ENCODE measurements at regions of chr16 and their contacts with region 1.

Region 1: GRCh38 chr16:80526425-80527061 is 14.2 kb upstream of the DYNLRB2 start:
- DNase-seq: peak; percentile 31 to 65 (median 58)
- H3K4me3 ChIP-seq: no peak overlapping the region
- H3K4me3 Mint-ChIP-seq: peak overlapping the region in 1 of 2 donors; percentile 6
- H3K27ac ChIP-seq: no peak overlapping the region
- H3K27ac Mint-ChIP-seq: no peak overlapping the region
- H3K4me1 ChIP-seq: no peaks in the 10 kb centered on the region
- H3K4me1 Mint-ChIP-seq: no peaks in the 10 kb centered on the region
- H3K27me3 ChIP-seq: no peaks in the 10 kb centered on the region
- H3K27me3 Mint-ChIP-seq: peaks cover 2 to 4% (median 2%) of the 10 kb centered on the region in 3 donors
- CTCF ChIP-seq: peak; percentile 76

Region 2: DNA sequence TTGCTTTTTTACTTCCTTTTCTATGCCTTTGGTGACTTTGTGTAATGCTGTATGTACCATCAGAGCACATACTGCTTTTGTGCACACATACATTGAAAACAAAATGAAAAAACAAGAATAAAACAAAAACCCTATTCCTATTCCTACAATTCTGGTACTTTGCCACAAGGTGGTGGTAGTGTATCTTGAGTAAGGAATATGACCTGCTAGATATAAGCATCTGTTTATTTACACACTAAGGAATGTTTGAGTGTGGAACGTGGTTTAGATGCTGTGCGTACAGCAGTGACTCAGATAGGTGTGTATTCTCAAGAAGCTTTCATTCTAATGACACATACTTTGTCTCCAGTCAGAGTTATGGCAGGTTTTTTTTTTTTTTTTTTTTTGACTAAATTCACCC is 1820.8 kb before region 1 on chr16:
- intact Hi-C with region 1: loop called in 1 of 2 experiments (anchors 10 kb)
- DNase-seq: peak; percentile 7 to 45 (median 39)
- H3K4me3 ChIP-seq: no peak overlapping the region
- H3K4me3 Mint-ChIP-seq: no peak overlapping the region
- H3K27ac ChIP-seq: no peak overlapping the region
- H3K27ac Mint-ChIP-seq: no peak overlapping the region
- H3K4me1 ChIP-seq: no peaks in the 10 kb centered on the region
- H3K4me1 Mint-ChIP-seq: no peaks in the 10 kb centered on the region
- H3K27me3 ChIP-seq: no peaks in the 10 kb centered on the region
- H3K27me3 Mint-ChIP-seq: peaks cover 0 to 2% (median 0%) of the 10 kb centered on the region in 3 donors
- CTCF ChIP-seq: peak; percentile 68

Region 3: GRCh38 chr16:80599466-80599865 is 72.9 kb after region 1 on chr16:
- intact Hi-C with region 1: no loop called
- DNase-seq: no peak
- H3K4me3 ChIP-seq: no peak overlapping the region
- H3K4me3 Mint-ChIP-seq: no peak overlapping the region
- H3K27ac ChIP-seq: no peak overlapping the region
- H3K27ac Mint-ChIP-seq: no peak overlapping the region
- H3K4me1 ChIP-seq: no peaks in the 10 kb centered on the region
- H3K4me1 Mint-ChIP-seq: no peaks in the 10 kb centered on the region
- H3K27me3 ChIP-seq: no peaks in the 10 kb centered on the region
- H3K27me3 Mint-ChIP-seq: peaks cover 0 to 1% (median 0%) of the 10 kb centered on the region in 3 donors
- CTCF ChIP-seq: no peak

Region 4: GRCh38 chr16:80824718-80825364 is 298.3 kb after region 1 on chr16:
- intact Hi-C with region 1: loop called in 1 of 2 experiments (anchors 5 kb)
- DNase-seq: peak; percentile 46 to 64 (median 48)
- H3K4me3 ChIP-seq: no peak overlapping the region
- H3K4me3 Mint-ChIP-seq: no peak overlapping the region
- H3K27ac ChIP-seq: no peak overlapping the region
- H3K27ac Mint-ChIP-seq: no peak overlapping the region
- H3K4me1 ChIP-seq: no peaks in the 10 kb centered on the region
- H3K4me1 Mint-ChIP-seq: no peaks in the 10 kb centered on the region
- H3K27me3 ChIP-seq: no peaks in the 10 kb centered on the region
- H3K27me3 Mint-ChIP-seq: no peaks in the 10 kb centered on the region
- CTCF ChIP-seq: peak; percentile 87